Activated CD8-positive, alpha-beta T cell treated with anti-CD3 and anti-CD28 coated beads for 36 hours (primary cell): ENCODE measurements at regions of chr12 and their contacts with region 1.

Region 1: DNA sequence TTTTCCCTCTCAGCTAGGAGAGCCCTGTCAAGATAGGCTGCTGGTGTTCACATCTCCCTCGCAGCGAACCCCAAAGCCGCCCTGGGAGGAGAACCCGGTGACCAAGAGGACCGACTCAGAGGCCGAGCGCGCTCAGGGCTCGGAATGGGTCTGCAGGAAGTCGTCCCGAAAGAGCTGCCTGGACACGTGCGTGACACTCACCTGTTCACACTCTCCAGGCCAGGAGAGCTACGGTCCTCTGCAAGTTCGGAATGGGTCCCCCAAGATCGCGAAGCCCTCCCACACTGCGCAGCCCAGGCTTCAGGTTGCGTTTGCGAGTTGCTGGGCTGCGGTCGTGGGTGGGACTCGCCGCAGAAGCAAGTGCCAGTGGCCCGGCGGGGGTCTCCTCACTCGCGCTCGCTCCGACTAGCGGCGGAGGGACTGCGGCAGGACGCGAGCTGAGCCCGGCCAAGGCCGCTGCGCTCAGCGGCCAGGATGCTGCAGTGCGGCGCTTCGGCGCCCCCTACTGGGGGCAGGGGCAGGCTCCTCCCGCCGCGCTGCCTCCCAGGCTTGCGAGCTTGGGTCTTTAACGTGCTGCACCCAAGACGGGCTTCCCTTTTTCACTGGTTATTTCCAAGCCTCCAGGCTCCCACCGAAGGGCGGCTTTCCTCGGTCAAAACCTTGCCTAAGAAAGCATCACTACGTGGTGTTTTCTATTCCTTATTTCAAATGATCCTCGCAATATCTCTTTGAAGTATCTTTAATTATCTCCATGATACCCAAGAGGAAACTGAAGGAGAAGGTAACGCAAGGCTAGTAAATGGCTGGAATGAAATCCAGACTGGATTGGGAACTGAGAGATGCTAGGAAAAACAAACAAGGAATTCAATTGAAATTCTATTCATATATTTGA is at the start of gene RERG:
- DNase-seq: peak; percentile 71
- ATAC-seq: peak; percentile 99
- H3K4me3 Mint-ChIP-seq: peak within 1 kb of the TSS; percentile 47
- H3K27ac Mint-ChIP-seq: no peak within 1 kb of the TSS
- H3K4me1 Mint-ChIP-seq: no peaks in the 10 kb centered on the region
- H3K27me3 Mint-ChIP-seq: peaks cover 29% of the 10 kb centered on the region
- CTCF ChIP-seq: peak; percentile 90
- total RNA-seq, gene RERG: not detected

Region 2: GRCh38 chr12:14723763-14724162 is 497.5 kb before region 1 on chr12:
- CTCF ChIA-PET with region 1: interaction called, 16 read pairs
- POLR2A ChIA-PET with region 1: no interaction called
- intact Hi-C with region 1: loop called (anchors 5 kb)
- DNase-seq: peak; percentile 70
- ATAC-seq: peak; percentile 77
- H3K4me3 Mint-ChIP-seq: no peak overlapping the region
- H3K27ac Mint-ChIP-seq: no peak overlapping the region
- H3K4me1 Mint-ChIP-seq: peaks cover 3% of the 10 kb centered on the region
- H3K27me3 Mint-ChIP-seq: peaks cover 10% of the 10 kb centered on the region
- CTCF ChIP-seq: peak; percentile 91

Region 3: DNA sequence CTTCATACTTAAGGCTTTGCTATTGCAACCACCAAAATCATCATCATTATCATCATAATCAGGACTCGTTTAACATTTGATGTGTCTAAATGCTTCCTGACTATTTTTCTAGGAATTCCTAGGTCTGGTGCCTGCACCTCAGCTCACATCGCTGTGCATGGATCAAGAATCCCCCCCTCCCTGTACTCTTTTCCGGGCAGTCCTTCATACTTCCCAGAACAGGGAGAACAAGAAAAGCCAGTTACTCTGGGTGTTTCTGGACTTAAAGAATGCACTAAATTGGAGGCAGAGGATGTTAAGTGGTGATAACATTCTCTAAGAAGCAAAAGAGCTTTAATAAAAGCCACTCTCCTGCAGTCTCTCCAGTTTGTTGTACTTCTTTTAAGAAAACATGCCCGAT is 292.3 kb before region 1 on chr12:
- CTCF ChIA-PET with region 1: no interaction called
- POLR2A ChIA-PET with region 1: no interaction called
- intact Hi-C with region 1: no loop called
- DNase-seq: no peak
- ATAC-seq: no peak
- H3K4me3 Mint-ChIP-seq: no peak overlapping the region
- H3K27ac Mint-ChIP-seq: no peak overlapping the region
- H3K4me1 Mint-ChIP-seq: peaks cover 4% of the 10 kb centered on the region
- H3K27me3 Mint-ChIP-seq: no peaks in the 10 kb centered on the region
- CTCF ChIP-seq: no peak

Region 4: GRCh38 chr12:15001733-15002382 is 219.4 kb before region 1 on chr12:
- CTCF ChIA-PET with region 1: interaction called, 4 read pairs
- POLR2A ChIA-PET with region 1: no interaction called
- intact Hi-C with region 1: loop called (anchors 10 kb)
- DNase-seq: no peak
- ATAC-seq: no peak
- H3K4me3 Mint-ChIP-seq: no peak overlapping the region
- H3K27ac Mint-ChIP-seq: no peak overlapping the region
- H3K4me1 Mint-ChIP-seq: no peaks in the 10 kb centered on the region
- H3K27me3 Mint-ChIP-seq: peaks cover 15% of the 10 kb centered on the region
- CTCF ChIP-seq: no peak

Region 5: DNA sequence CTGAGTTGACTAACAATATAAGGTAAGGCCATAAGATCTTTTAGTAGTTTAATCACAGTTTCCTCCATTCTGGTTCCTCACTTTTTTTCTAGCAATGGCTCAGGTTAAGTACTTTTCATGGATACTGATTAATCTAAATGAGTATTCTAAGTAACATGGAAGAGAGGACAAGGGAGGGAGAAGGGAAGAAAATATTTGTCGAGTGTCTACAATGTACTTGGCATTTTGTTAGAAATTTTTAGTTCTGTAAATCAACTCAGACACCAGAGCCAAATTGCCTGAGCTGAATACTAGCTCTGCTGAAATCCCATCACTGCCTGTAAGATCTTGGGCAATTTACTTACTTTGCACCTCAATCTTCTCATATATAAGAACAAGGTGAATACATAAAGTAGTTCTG is 20.2 kb before region 1 on chr12:
- CTCF ChIA-PET with region 1: interaction called, 17 read pairs
- POLR2A ChIA-PET with region 1: no interaction called
- intact Hi-C with region 1: no loop called
- DNase-seq: no peak
- ATAC-seq: no peak
- H3K4me3 Mint-ChIP-seq: no peak overlapping the region
- H3K27ac Mint-ChIP-seq: no peak overlapping the region
- H3K4me1 Mint-ChIP-seq: no peaks in the 10 kb centered on the region
- H3K27me3 Mint-ChIP-seq: peaks cover 3% of the 10 kb centered on the region
- CTCF ChIP-seq: no peak

Region 6: GRCh38 chr12:15268927-15269552 is 47.8 kb after region 1 on chr12:
- CTCF ChIA-PET with region 1: interaction called, 26 read pairs
- POLR2A ChIA-PET with region 1: no interaction called
- intact Hi-C with region 1: no loop called
- DNase-seq: peak; percentile 48
- ATAC-seq: peak; percentile 76
- H3K4me3 Mint-ChIP-seq: no peak overlapping the region
- H3K27ac Mint-ChIP-seq: no peak overlapping the region
- H3K4me1 Mint-ChIP-seq: peaks cover 2% of the 10 kb centered on the region
- H3K27me3 Mint-ChIP-seq: peaks cover 2% of the 10 kb centered on the region
- CTCF ChIP-seq: peak; percentile 88